Heart left ventricle (tissue), 16 donors: ENCODE measurements at regions of chr12 and their contacts with region 1.

Region 1: DNA sequence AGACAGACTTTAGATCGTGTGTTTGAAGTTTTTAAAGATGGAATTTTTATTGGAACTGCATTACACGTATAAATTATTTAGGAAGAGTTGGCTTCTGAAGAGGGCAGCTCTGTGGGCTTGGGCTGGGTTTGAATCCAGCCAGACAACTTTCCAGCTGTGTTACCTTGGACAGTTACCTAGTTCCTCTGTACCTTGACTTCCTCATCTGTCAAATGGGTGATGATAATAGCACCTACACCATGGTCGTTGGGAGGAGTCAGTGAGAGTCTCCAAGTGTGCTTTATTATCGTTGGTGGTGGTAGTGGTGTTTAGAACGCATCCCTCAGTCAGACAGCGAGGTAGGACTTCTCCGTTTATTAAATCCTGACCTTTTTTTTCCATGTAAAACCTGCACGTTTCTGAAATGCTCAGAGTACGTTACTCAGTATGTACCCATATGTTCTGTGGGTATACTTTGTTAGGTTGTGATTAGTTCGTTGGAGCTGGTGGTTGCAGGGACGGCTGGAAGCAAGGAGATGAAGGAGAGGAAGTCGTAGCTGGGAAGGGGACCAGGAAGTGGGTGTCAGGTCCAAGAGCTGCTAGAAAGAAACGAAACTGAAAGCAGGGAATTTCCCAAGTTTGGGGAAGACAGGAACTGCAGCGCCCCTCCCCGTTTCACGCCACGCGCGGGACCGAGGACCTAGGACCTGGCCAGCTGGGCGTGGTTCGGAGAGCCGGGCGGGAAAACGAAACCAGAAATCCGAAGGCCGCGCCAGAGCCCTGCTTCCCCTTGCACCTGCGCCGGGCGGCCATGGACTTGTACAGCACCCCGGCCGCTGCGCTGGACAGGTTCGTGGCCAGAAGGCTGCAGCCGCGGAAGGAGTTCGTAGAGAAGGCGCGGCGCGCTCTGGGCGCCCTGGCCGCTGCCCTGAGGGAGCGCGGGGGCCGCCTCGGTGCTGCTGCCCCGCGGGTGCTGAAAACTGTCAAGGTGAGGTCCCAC is at the start of gene OAS3:
- DNase-seq: peak; percentile 90 to 93 (median 91)
- ATAC-seq: peak; percentile 83 to 97 (median 94)
- H3K4me3 ChIP-seq: peak within 1 kb of the TSS; percentile 51 to 95 (median 81)
- H3K27ac ChIP-seq: peak within 1 kb of the TSS; percentile 55 to 92 (median 82)
- H3K4me1 ChIP-seq: peaks cover 0 to 34% (median 17%) of the 10 kb centered on the region in 12 donors
- H3K27me3 ChIP-seq: peaks cover 0 to 8% (median 0%) of the 10 kb centered on the region in 9 donors
- CTCF ChIP-seq: peak in 1 of 12 donors; percentile 18
- POLR2A ChIP-seq: peak in 1 of 2 donors; percentile 38
- total RNA-seq, gene OAS3: 5.7 to 45.1 (median 10.0) TPM

Region 2: DNA sequence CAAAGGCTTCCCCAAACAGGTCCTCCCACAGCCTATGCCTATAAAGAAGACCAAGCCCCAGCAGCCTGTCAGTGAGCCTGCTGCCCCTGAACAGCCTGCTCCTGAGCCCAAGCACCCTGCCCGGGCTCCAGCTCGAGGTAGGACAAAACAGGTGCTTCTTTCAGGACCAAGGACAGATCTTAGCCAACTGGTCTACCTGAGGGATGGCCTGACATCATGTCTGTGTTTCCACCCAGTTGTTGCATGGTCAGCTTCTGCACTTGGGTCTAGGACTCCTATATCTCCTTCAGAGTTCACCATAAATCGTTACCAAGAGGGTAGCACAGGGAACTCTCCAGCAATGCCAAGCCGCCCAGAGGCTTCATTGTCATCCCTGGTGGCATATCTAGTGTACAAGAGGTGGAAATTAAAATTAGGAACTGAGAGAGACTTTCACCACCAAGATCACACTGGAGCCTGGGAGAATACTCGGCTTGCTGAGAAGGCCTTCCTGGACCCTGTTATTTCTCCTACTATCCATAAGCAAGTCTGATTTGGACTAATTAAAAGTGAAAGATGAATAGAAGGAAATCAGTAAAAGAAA is 69.5 kb before region 1 on chr12:
- intact Hi-C with region 1: no loop called
- DNase-seq: no peak
- ATAC-seq: no peak
- H3K4me3 ChIP-seq: no peak overlapping the region
- H3K27ac ChIP-seq: no peak overlapping the region
- H3K4me1 ChIP-seq: no peaks in the 10 kb centered on the region
- H3K27me3 ChIP-seq: peaks cover 0 to 16% (median 6%) of the 10 kb centered on the region in 9 donors
- CTCF ChIP-seq: no peak
- POLR2A ChIP-seq: no peak

Region 3: DNA sequence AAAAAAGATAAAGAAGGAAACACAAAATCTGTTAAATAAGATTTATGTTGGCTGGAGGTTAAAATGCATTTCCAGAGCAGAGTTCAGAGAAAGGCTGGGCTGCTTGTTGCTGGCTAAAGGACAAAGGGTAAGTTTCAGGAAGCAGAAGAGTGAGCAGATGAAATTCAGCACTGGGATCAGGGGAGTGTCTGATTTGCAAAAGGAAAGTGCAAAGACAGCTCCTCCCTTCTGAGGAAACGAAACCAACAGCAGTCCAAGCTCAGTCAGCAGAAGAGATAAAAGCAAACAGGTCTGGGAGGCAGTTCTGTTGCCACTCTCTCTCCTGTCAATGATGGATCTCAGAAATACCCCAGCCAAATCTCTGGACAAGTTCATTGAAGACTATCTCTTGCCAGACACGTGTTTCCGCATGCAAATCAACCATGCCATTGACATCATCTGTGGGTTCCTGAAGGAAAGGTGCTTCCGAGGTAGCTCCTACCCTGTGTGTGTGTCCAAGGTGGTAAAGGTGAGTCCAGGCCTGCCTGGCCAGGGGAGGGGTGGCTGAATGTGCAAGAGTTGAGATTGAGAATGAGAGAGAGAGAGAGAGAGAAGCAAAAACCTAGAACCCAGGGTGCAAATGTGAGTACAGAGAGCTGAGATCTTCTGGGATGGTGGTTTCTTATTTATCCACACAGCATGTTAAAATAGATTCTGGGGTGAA is 31.2 kb before region 1 on chr12 and contains the start of gene OAS1:
- intact Hi-C with region 1: loop called in 1 of 10 experiments (anchors 2 kb)
- DNase-seq: peak in 3 of 5 donors; percentile 32 to 49 (median 38)
- ATAC-seq: peak; percentile 67 to 91 (median 88)
- H3K4me3 ChIP-seq: peak within 1 kb of the TSS; percentile 18 to 67 (median 57)
- H3K27ac ChIP-seq: peak within 1 kb of the TSS in 11 of 12 donors; percentile 30 to 92 (median 63)
- H3K4me1 ChIP-seq: peaks cover 0 to 61% (median 16%) of the 10 kb centered on the region in 12 donors
- H3K27me3 ChIP-seq: no peaks in the 10 kb centered on the region
- CTCF ChIP-seq: no peak
- POLR2A ChIP-seq: no peak
- total RNA-seq, gene OAS1: 4.1 to 34.8 (median 8.0) TPM

Region 4: DNA sequence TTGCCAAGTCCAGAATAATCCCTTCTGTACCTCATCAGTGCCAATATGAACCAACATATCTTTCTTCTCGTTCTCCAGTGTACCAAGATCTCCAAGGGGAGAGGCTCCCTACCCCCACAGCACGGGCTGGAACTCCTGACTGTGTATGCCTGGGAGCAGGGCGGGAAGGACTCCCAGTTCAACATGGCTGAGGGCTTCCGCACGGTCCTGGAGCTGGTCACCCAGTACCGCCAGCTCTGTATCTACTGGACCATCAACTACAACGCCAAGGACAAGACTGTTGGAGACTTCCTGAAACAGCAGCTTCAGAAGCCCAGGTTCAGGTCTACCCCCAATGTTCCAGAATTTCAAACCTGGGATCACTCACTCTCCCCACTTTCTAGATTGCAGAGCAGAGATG is 29.8 kb after region 1 on chr12:
- intact Hi-C with region 1: no loop called
- DNase-seq: no peak
- ATAC-seq: no peak
- H3K4me3 ChIP-seq: no peak overlapping the region
- H3K27ac ChIP-seq: no peak overlapping the region
- H3K4me1 ChIP-seq: peaks cover 0 to 10% (median 0%) of the 10 kb centered on the region in 12 donors
- H3K27me3 ChIP-seq: no peaks in the 10 kb centered on the region
- CTCF ChIP-seq: no peak
- POLR2A ChIP-seq: no peak

Region 5: GRCh38 chr12:112978163-112979040 is 40.4 kb after region 1 on chr12 and contains the start of gene OAS2:
- intact Hi-C with region 1: loop called in 1 of 10 experiments (anchors 5 kb)
- DNase-seq: peak; percentile 64 to 76 (median 70)
- ATAC-seq: peak; percentile 88 to 97 (median 94)
- H3K4me3 ChIP-seq: peak within 1 kb of the TSS; percentile 19 to 90 (median 64)
- H3K27ac ChIP-seq: peak within 1 kb of the TSS; percentile 54 to 98 (median 87)
- H3K4me1 ChIP-seq: peaks cover 0 to 40% (median 12%) of the 10 kb centered on the region in 12 donors
- H3K27me3 ChIP-seq: no peaks in the 10 kb centered on the region
- CTCF ChIP-seq: no peak
- POLR2A ChIP-seq: peak in 1 of 2 donors; percentile 54
- total RNA-seq, gene OAS2: 6.0 to 46.1 (median 9.8) TPM